Activated CD4-positive, alpha-beta T cell treated with anti-CD3 and anti-CD28 coated beads for 36 hours (primary cell): ENCODE measurements at regions of chr15 and their contacts with region 1.

Region 1: DNA sequence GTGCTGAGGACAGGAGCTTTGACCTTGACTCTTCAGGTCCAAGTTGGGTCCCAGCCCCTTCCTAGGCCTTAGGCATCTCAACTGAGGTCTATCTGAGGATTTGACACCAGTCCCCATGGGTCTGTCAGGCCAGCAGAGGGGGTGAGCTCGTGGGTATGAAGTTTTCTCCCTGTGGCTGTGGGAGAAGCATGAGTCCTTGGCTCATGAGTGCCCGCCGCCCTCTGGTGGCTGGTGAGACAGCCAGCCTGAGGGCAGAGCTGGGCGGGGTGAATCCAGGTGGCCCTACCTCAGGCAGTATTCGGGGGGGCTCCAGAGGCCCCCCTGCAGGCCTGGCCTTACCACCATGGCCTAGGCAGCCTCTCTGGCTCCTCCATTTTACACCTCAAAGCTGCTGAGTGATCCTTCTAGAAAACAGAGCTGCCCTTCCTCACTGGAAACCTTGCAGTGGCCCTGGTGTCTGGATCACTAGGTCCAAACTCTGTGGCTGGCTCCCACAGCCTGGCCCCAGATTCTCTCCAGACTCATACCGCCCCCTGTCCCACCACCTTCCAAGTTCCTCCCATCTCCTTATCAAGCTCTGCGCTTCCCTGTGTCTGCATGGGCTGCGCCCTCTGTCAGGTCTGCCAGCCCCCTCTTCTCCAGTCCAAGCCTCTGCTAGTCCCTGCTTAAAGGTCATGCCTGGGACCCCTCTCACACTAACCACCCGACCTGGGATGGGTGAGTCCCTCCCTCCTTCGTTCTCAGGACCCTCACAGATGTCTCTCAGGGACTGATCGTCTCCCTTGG is 16.1 kb downstream of the SH2D7 start:
- DNase-seq: peak; percentile 92
- ATAC-seq: peak; percentile 74
- H3K4me3 Mint-ChIP-seq: no peak overlapping the region
- H3K27ac Mint-ChIP-seq: no peak overlapping the region
- H3K4me1 Mint-ChIP-seq: peaks cover 32% of the 10 kb centered on the region
- H3K27me3 Mint-ChIP-seq: no peaks in the 10 kb centered on the region

Region 2: DNA sequence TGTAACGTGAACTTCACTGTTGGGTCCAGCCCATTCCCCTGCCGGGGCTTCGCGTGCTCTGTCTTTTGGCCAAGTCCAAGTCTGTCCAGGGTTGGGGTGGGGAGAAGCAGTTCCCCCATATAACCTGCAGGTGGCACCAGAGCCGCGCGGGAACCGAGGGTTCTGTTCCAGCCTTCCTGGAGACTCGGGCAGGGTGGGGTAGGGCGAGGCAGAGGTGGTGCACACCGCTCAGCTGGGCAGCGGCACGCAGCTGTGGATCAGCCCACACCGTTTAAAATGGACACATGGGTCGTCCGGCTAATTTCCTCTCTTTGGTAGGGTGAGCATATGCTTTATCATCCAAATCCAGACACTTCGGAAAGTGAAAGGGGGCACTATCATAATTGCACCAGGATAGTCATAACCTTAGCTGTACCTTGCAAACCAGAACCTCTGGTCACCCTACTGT is 149.0 kb before region 1 on chr15:
- CTCF ChIA-PET with region 1: interaction called, 48 read pairs
- POLR2A ChIA-PET with region 1: no interaction called
- intact Hi-C with region 1: loop called (anchors 1 to 2 kb)
- DNase-seq: peak; percentile 87
- ATAC-seq: peak; percentile 98
- H3K4me3 Mint-ChIP-seq: no peak overlapping the region
- H3K27ac Mint-ChIP-seq: no peak overlapping the region
- H3K4me1 Mint-ChIP-seq: peaks cover 5% of the 10 kb centered on the region
- H3K27me3 Mint-ChIP-seq: peaks cover 6% of the 10 kb centered on the region

Region 3: GRCh38 chr15:78012643-78013077 is 95.8 kb before region 1 on chr15:
- CTCF ChIA-PET with region 1: interaction called, 10 read pairs
- POLR2A ChIA-PET with region 1: no interaction called
- intact Hi-C with region 1: no loop called
- DNase-seq: no peak
- ATAC-seq: no peak
- H3K4me3 Mint-ChIP-seq: no peak overlapping the region
- H3K27ac Mint-ChIP-seq: no peak overlapping the region
- H3K4me1 Mint-ChIP-seq: no peaks in the 10 kb centered on the region
- H3K27me3 Mint-ChIP-seq: no peaks in the 10 kb centered on the region

Region 4: GRCh38 chr15:78065284-78065872 is 43.1 kb before region 1 on chr15:
- CTCF ChIA-PET with region 1: interaction called, 10 read pairs
- POLR2A ChIA-PET with region 1: no interaction called
- intact Hi-C with region 1: no loop called
- DNase-seq: peak; percentile 16
- ATAC-seq: no peak
- H3K4me3 Mint-ChIP-seq: no peak overlapping the region
- H3K27ac Mint-ChIP-seq: no peak overlapping the region
- H3K4me1 Mint-ChIP-seq: peaks cover 14% of the 10 kb centered on the region
- H3K27me3 Mint-ChIP-seq: no peaks in the 10 kb centered on the region

Region 5: GRCh38 chr15:78131295-78132061 is 23.0 kb after region 1 on chr15 and contains the start of gene CIB2:
- CTCF ChIA-PET with region 1: interaction called, 12 read pairs
- POLR2A ChIA-PET with region 1: interaction called, 3 read pairs
- intact Hi-C with region 1: no loop called
- DNase-seq: peak; percentile 86
- ATAC-seq: peak; percentile 87
- H3K4me3 Mint-ChIP-seq: peak within 1 kb of the TSS; percentile 82
- H3K27ac Mint-ChIP-seq: peak within 1 kb of the TSS; percentile 88
- H3K4me1 Mint-ChIP-seq: peaks cover 20% of the 10 kb centered on the region
- H3K27me3 Mint-ChIP-seq: no peaks in the 10 kb centered on the region
- total RNA-seq, gene CIB2: 0.91 to 1.2 TPM

Region 6: GRCh38 chr15:78142332-78142731 is 33.8 kb after region 1 on chr15:
- CTCF ChIA-PET with region 1: no interaction called
- POLR2A ChIA-PET with region 1: no interaction called
- intact Hi-C with region 1: no loop called
- DNase-seq: no peak
- ATAC-seq: no peak
- H3K4me3 Mint-ChIP-seq: no peak overlapping the region
- H3K27ac Mint-ChIP-seq: no peak overlapping the region
- H3K4me1 Mint-ChIP-seq: peaks cover 4% of the 10 kb centered on the region
- H3K27me3 Mint-ChIP-seq: no peaks in the 10 kb centered on the region

Region 7: DNA sequence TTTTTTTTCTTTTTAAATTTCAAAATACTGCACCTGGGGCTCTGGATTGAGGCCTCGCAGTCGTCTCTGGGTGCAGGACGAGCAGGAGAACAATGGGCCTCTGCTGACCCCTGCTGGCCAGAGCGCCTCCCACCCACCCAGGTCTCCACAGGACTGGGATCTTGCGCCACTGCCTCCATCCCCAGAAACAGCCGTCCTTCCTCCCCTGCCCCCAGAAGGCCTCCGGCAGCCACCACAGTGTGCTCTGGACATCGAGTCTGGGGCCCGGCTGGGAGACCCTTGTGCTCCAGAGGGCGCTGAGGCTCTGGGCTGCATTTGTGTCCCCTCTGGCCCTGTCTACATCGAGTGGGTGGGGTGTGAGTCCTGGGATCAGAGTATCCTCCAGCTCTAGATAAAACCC is 132.5 kb after region 1 on chr15:
- CTCF ChIA-PET with region 1: interaction called, 123 read pairs
- POLR2A ChIA-PET with region 1: no interaction called
- intact Hi-C with region 1: loop called (anchors 1 kb)
- DNase-seq: peak; percentile 93
- ATAC-seq: peak; percentile 96
- H3K4me3 Mint-ChIP-seq: no peak overlapping the region
- H3K27ac Mint-ChIP-seq: no peak overlapping the region
- H3K4me1 Mint-ChIP-seq: no peaks in the 10 kb centered on the region
- H3K27me3 Mint-ChIP-seq: no peaks in the 10 kb centered on the region

Region 8: GRCh38 chr15:78276064-78276943 is 167.8 kb after region 1 on chr15:
- CTCF ChIA-PET with region 1: no interaction called
- POLR2A ChIA-PET with region 1: no interaction called
- intact Hi-C with region 1: no loop called
- DNase-seq: no peak
- ATAC-seq: no peak
- H3K4me3 Mint-ChIP-seq: no peak overlapping the region
- H3K27ac Mint-ChIP-seq: no peak overlapping the region
- H3K4me1 Mint-ChIP-seq: no peaks in the 10 kb centered on the region
- H3K27me3 Mint-ChIP-seq: no peaks in the 10 kb centered on the region